Left ventricle myocardium superior (tissue), 1 donor: ENCODE measurements at regions of chr5 and their contacts with region 1.

Region 1: DNA sequence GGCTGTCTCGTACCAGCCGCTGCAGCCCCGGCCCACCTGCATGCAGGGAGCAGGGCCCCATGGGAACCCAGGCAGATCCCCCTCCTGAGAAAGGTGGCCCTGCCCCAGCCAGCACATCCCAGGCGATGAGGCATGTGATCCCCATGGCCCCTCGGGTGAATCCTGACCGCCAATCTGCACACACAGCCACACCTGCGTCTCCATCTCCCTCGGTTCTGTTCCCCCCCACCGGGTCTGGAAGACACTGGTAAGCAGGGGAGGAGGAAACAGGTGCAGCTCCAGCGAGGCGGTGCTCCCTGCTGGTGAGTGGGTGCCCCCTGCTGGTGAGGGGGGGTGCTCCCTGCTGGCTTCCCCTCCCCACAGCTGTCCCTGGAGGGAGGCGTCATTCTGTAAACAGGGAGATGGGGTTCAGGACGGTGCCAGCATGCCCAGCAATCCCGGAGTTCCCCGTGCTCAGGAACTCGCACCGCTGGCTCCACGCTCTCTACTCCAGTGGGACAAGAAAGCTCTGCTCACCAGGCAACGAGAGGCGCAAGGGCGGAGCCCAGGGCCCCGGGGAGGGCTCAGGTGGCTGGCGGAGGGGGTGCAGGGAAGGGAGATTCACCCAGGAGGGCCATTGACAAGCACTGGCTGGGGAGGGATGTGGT is 28.4 kb upstream of the SLC12A7 start:
- DNase-seq: peak; percentile 92
- ATAC-seq: peak; percentile 87

Region 2: DNA sequence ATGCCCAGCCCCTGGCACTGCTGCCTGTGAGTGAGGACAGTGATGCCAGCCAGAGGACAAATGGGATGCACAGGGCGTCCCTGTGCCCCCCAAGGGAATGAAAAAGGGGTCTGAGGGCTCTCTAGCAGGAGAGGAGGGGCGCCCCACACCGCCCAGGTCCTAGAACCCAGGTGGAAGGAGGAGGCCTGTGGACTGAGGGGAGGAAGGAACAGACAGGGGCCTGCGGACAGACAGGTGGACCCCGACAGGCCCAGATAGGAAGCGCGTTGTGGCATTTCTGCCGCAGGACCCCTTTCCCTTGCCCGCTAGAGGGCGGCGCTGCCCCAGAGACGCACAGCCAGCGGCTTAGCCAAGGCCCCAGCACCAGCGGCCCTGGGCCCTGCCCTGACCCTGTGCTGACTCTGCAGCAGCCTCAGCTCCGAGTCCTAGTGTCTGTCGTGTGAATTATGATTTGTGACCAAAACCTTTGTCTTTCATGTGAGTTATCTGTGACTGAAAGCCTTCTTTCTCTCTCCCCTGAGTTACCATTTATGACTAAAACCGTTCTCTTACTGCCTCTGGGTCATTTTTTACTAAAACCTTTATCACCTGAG is 216.9 kb before region 1 on chr5:
- intact Hi-C with region 1: loop called (anchors 10 kb)
- DNase-seq: peak; percentile 92
- ATAC-seq: peak; percentile 92